CD4-positive, alpha-beta memory T cell (primary cell): ENCODE measurements at regions of chr1 and their contacts with region 1.

Region 1: DNA sequence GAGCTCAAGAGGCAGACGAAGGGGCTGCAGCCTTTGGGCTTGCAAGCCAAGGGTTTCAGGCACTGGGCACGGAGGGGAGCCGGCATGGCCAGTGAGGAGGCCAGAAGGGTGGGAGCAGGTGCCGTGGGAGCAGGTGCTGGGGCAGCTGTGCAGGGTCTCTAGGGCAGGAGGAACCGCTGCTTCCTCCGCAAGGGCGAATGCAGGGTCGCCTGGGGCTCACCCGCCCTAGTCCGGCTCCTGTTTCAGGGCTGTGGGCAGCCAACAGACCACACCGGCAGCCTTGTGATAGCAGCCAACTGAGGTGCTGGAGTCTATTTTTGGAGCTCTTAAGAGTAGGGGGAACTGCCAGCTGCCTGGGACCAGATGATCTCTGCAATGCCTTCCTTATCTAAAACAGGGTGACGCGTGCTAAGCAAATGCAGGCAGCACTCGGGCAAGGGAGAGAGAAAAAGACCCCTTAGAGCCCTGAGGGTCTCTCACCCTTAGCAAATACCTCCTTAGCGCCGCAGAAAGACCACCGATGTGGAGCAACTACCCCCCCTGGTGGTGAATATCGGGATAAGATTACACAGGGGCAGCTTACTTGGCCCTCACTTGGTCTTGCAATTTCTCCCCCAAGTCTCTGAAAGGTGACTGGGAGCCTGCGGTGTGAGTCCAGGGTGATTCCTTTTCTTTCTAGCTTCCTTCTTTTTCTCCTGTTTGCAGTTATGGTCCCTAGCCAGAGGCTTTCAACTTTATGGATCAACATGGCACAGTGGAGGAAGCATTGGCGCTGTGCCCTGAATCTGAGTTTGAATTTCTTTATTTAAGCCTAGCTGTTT is 20.7 kb upstream of the MAPKAPK2 start:
- DNase-seq: peak; percentile 64 to 76 (median 69)
- H3K4me3 ChIP-seq: no peak overlapping the region
- H3K4me3 Mint-ChIP-seq: peak overlapping the region in 2 of 8 donors; percentile 24 to 47
- H3K27ac ChIP-seq: no peak overlapping the region
- H3K27ac Mint-ChIP-seq: peak overlapping the region in 2 of 7 donors; percentile 25 to 33
- H3K4me1 ChIP-seq: peaks cover 14% of the 10 kb centered on the region
- H3K4me1 Mint-ChIP-seq: peaks cover 9 to 17% (median 11%) of the 10 kb centered on the region in 4 donors
- H3K27me3 ChIP-seq: no peaks in the 10 kb centered on the region
- H3K27me3 Mint-ChIP-seq: peaks cover 12 to 17% of the 10 kb centered on the region in 2 donors

Region 2: DNA sequence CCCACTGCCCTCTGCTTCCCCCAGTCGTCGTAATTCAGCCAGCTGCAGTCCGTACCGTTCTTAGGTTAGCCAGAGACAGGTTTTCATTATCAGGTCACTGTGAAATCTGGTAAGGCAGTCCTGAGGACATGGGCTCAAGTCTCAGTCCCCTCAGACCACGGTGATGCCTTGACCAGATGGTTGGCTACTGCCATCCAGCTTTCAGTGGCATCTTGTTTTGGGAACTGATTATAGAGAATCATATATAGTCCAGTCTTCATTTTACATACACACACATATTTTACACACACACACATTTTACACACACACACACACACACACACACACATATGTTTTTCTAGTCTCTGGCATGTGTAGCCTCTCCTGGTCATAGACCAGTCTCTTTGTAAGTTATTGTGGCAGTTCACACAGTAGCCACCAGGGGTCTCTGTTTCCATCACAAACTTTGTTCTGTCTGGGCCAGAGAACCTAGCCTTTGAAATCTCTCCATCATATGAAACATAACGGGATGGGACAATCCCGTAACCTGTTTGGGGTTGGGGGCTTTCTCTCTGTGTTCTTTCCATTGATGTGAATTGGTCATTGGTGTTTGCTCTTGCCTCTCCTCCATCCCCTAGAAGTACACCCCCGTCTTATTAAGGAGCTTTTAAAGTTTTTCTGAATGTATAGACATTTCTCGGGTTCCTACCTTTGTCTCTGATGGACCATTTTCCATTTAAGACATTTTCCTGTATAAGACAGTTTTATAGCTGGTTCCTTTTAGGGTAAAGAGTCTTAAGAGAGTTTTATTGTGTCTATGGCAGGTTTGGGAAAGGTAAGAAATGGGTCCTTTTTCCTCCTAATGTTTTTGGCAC is 202.2 kb before region 1 on chr1:
- CTCF ChIA-PET with region 1: interaction called, 57 read pairs
- POLR2A ChIA-PET with region 1: no interaction called
- intact Hi-C with region 1: loop called (anchors 1 kb)
- DNase-seq: peak; percentile 62 to 72 (median 65)
- H3K4me3 ChIP-seq: no peak overlapping the region
- H3K4me3 Mint-ChIP-seq: no peak overlapping the region
- H3K27ac ChIP-seq: no peak overlapping the region
- H3K27ac Mint-ChIP-seq: peak overlapping the region in 4 of 7 donors; percentile 13 to 77 (median 16)
- H3K4me1 ChIP-seq: peaks cover 36% of the 10 kb centered on the region
- H3K4me1 Mint-ChIP-seq: peaks cover 21 to 49% (median 36%) of the 10 kb centered on the region in 4 donors
- H3K27me3 ChIP-seq: no peaks in the 10 kb centered on the region
- H3K27me3 Mint-ChIP-seq: no peaks in the 10 kb centered on the region

Region 3: GRCh38 chr1:206479183-206480125 is 184.6 kb before region 1 on chr1:
- CTCF ChIA-PET with region 1: interaction called, 54 read pairs
- POLR2A ChIA-PET with region 1: no interaction called
- intact Hi-C with region 1: loop called (anchors 5 kb)
- DNase-seq: peak; percentile 46 to 67 (median 52)
- H3K4me3 ChIP-seq: no peak overlapping the region
- H3K4me3 Mint-ChIP-seq: no peak overlapping the region
- H3K27ac ChIP-seq: no peak overlapping the region
- H3K27ac Mint-ChIP-seq: peak overlapping the region in 5 of 7 donors; percentile 8 to 80 (median 78)
- H3K4me1 ChIP-seq: peaks cover 21% of the 10 kb centered on the region
- H3K4me1 Mint-ChIP-seq: peaks cover 5 to 18% (median 12%) of the 10 kb centered on the region in 4 donors
- H3K27me3 ChIP-seq: no peaks in the 10 kb centered on the region
- H3K27me3 Mint-ChIP-seq: no peaks in the 10 kb centered on the region

Region 4: DNA sequence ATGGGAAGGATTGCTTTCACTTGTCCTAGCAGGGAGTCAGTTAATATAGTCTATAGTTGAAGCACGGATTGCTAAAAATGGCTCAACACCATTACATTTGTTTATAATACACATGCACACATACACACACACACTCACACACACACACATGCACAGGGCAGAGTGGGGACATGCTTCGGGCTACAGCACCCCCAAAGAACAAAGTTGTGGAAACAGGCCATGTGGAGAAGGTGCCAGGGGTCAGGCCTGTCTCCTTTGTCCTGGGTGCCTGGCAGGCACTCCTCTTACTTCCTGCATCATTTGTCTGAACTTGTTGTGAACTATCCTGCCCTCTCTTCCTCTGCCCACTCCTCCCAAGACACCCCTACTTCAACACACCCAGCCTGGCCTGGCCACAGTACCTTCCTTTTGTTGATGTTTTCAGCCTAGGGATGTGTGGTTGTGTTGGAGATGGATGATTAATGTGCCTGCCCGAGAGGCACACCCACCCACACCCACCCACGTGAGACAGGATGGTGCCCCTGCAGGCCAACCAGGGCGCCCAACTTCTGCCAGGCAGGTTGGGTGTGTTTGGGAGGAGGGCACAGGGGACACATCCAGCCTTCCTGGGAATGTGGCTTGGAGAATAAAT is 139.2 kb before region 1 on chr1:
- CTCF ChIA-PET with region 1: no interaction called
- POLR2A ChIA-PET with region 1: no interaction called
- intact Hi-C with region 1: no loop called
- DNase-seq: no peak
- H3K4me3 ChIP-seq: no peak overlapping the region
- H3K4me3 Mint-ChIP-seq: no peak overlapping the region
- H3K27ac ChIP-seq: no peak overlapping the region
- H3K27ac Mint-ChIP-seq: peak overlapping the region in 1 of 7 donors; percentile 42
- H3K4me1 ChIP-seq: no peaks in the 10 kb centered on the region
- H3K4me1 Mint-ChIP-seq: peaks cover 0 to 4% (median under 1%) of the 10 kb centered on the region in 4 donors
- H3K27me3 ChIP-seq: no peaks in the 10 kb centered on the region
- H3K27me3 Mint-ChIP-seq: no peaks in the 10 kb centered on the region

Region 5: DNA sequence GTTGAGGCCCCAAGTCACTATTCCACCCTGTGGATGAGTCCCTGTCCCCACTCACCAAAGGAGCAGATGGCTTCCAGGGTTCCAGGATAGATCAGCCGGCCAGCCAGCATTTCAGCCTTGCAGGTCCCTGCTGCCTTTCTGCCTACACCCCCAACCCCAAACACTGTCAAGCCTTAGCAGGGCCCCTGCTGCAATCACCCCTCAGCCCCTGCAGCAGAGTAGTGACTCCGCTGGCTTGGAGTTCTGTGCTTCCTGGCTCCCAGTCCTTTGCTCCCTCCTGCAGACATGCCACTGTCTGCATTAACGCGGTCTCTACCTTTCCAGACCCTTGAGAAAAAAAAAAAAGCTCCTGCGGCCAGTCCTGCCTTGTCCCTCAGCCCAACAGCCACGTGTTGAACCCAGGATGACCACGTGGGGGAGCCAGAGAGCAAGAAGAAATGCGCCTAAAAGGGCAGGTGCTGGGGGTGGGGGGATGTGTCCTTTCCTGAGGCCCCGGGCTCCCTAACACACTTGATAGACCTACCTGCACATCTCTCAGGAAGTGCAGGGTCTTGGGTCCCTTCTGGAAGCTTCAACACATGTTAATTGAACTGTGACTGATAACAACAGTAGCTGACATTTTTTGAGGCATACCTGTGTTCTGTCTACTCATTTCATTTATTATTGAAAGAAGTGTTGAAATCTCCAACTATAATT is 119.3 kb before region 1 on chr1:
- CTCF ChIA-PET with region 1: interaction called, 57 read pairs
- POLR2A ChIA-PET with region 1: interaction called, 3 read pairs
- intact Hi-C with region 1: loop called (anchors 1 kb)
- DNase-seq: peak; percentile 66 to 83 (median 76)
- H3K4me3 ChIP-seq: no peak overlapping the region
- H3K4me3 Mint-ChIP-seq: peak overlapping the region in 2 of 8 donors; percentile 6 to 52
- H3K27ac ChIP-seq: no peak overlapping the region
- H3K27ac Mint-ChIP-seq: peak overlapping the region in 5 of 7 donors; percentile 27 to 77 (median 60)
- H3K4me1 ChIP-seq: peaks cover 10% of the 10 kb centered on the region
- H3K4me1 Mint-ChIP-seq: peaks cover 5 to 15% (median 11%) of the 10 kb centered on the region in 4 donors
- H3K27me3 ChIP-seq: no peaks in the 10 kb centered on the region
- H3K27me3 Mint-ChIP-seq: no peaks in the 10 kb centered on the region

Region 6: DNA sequence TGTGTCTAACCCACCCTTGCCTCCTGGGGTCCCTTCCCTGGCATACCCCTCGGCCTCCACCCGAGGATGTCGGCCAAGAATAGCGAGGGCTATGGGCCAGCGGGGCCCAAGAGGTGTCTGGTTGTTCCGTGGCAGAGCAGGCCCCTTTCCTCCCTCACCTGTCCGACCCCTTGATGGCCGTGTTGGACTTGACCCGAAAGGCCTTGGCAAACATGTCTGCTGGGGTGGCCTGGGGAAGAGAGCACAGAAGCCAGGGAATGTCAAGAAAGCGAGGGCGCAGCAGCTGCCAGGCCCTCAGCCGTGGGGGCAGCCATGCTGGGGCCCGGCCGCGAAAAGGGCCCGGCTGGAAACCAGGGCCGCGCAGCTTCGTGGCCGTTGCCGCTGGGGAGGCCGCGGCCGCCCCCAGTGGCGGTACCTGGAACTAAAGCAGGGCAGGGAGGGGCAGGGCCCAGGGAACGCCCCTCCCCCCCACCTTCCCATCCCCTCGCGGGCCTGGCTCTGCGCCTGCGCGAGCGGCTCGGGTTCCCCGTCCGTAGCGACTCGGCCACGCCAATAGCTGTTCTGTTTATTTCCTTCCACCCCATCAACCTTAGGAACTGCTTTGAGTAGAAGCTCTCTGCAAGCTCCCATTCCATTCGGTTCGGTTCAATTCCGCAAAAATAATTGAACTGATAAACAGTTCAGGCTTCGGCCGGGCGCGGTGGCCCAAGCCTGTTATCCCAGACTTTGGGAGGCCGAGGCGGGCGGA is 51.7 kb before region 1 on chr1 and contains the start of gene EIF2D:
- CTCF ChIA-PET with region 1: interaction called, 15 read pairs
- POLR2A ChIA-PET with region 1: interaction called, 3 read pairs
- intact Hi-C with region 1: loop called (anchors 1 kb)
- DNase-seq: peak; percentile 90 to 96 (median 92)
- H3K4me3 ChIP-seq: peak within 1 kb of the TSS; percentile 62 to 77
- H3K4me3 Mint-ChIP-seq: peak within 1 kb of the TSS; percentile 91 to 95 (median 93)
- H3K27ac ChIP-seq: peak within 1 kb of the TSS; percentile 80
- H3K27ac Mint-ChIP-seq: peak within 1 kb of the TSS; percentile 87 to 98 (median 96)
- H3K4me1 ChIP-seq: peaks cover 12% of the 10 kb centered on the region
- H3K4me1 Mint-ChIP-seq: peaks cover 12 to 34% (median 21%) of the 10 kb centered on the region in 4 donors
- H3K27me3 ChIP-seq: no peaks in the 10 kb centered on the region
- H3K27me3 Mint-ChIP-seq: no peaks in the 10 kb centered on the region
- total RNA-seq, gene EIF2D: 53.5 to 54.5 TPM

Region 7: GRCh38 chr1:206646504-206646903 is 17.5 kb before region 1 on chr1:
- CTCF ChIA-PET with region 1: interaction called, 33 read pairs
- POLR2A ChIA-PET with region 1: no interaction called
- intact Hi-C with region 1: no loop called
- DNase-seq: no peak
- H3K4me3 ChIP-seq: no peak overlapping the region
- H3K4me3 Mint-ChIP-seq: no peak overlapping the region
- H3K27ac ChIP-seq: no peak overlapping the region
- H3K27ac Mint-ChIP-seq: no peak overlapping the region
- H3K4me1 ChIP-seq: no peaks in the 10 kb centered on the region
- H3K4me1 Mint-ChIP-seq: no peaks in the 10 kb centered on the region
- H3K27me3 ChIP-seq: no peaks in the 10 kb centered on the region
- H3K27me3 Mint-ChIP-seq: no peaks in the 10 kb centered on the region

Region 8: DNA sequence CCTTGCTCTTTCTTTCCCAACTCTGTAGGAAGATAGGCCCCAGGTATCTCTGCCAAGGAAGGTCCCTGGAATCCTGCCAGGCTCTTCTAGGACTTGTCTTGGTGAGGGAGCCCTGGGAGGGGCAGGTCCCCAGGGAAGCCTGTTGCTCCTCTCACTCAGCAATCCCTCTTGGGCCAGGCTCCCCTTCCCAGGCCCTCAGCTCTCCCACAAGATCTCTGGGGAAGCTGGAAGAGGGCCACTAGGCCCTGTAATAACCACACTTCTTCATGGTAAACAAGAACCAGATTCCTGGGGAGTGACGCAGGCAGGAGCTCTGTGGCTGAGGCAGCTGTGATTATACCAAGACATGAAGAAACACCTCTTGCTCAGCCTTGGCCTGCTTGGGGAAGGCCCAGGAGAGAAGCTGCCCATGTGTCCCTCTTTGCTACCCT is 10.7 kb after region 1 on chr1:
- CTCF ChIA-PET with region 1: interaction called, 37 read pairs
- POLR2A ChIA-PET with region 1: no interaction called
- intact Hi-C with region 1: no loop called
- DNase-seq: no peak
- H3K4me3 ChIP-seq: no peak overlapping the region
- H3K4me3 Mint-ChIP-seq: no peak overlapping the region
- H3K27ac ChIP-seq: no peak overlapping the region
- H3K27ac Mint-ChIP-seq: no peak overlapping the region
- H3K4me1 ChIP-seq: peaks cover 9% of the 10 kb centered on the region
- H3K4me1 Mint-ChIP-seq: peaks cover 0 to 10% (median 3%) of the 10 kb centered on the region in 4 donors
- H3K27me3 ChIP-seq: no peaks in the 10 kb centered on the region
- H3K27me3 Mint-ChIP-seq: peaks cover 0 to 1% of the 10 kb centered on the region in 2 donors

Region 9: GRCh38 chr1:206744683-206745082 is 80.6 kb after region 1 on chr1:
- CTCF ChIA-PET with region 1: no interaction called
- POLR2A ChIA-PET with region 1: no interaction called
- intact Hi-C with region 1: no loop called
- DNase-seq: peak in 1 of 5 donors; percentile 44
- H3K4me3 ChIP-seq: no peak overlapping the region
- H3K4me3 Mint-ChIP-seq: peak overlapping the region in 3 of 8 donors; percentile 31 to 60 (median 39)
- H3K27ac ChIP-seq: no peak overlapping the region
- H3K27ac Mint-ChIP-seq: peak overlapping the region in 5 of 7 donors; percentile 33 to 78 (median 48)
- H3K4me1 ChIP-seq: peaks cover 25% of the 10 kb centered on the region
- H3K4me1 Mint-ChIP-seq: peaks cover 20 to 64% (median 33%) of the 10 kb centered on the region in 4 donors
- H3K27me3 ChIP-seq: no peaks in the 10 kb centered on the region
- H3K27me3 Mint-ChIP-seq: no peaks in the 10 kb centered on the region

Region 10: DNA sequence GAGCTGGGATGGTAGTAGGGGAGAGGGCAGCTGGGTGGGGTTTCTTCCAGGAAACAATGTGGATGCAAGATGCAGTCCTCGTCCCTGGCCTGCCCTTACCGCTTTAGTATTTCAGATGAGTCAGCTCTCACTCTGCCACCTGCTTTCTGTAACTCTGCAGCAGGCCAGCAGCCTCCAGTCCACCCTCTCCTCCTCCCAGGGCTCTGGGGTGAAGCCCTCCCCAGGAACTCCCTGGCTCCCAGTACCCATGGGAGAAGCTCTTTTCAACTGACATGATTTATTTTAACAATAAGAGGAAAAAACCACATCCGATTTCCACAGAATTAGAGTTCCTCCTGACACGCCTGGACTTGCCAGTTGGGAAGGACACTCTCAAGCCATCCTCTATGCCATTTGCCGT is 162.4 kb after region 1 on chr1:
- CTCF ChIA-PET with region 1: no interaction called
- POLR2A ChIA-PET with region 1: no interaction called
- intact Hi-C with region 1: no loop called
- DNase-seq: no peak
- H3K4me3 ChIP-seq: no peak overlapping the region
- H3K4me3 Mint-ChIP-seq: no peak overlapping the region
- H3K27ac ChIP-seq: no peak overlapping the region
- H3K27ac Mint-ChIP-seq: peak overlapping the region in 2 of 7 donors; percentile 1 to 14
- H3K4me1 ChIP-seq: peaks cover 21% of the 10 kb centered on the region
- H3K4me1 Mint-ChIP-seq: peaks cover 14 to 37% (median 23%) of the 10 kb centered on the region in 4 donors
- H3K27me3 ChIP-seq: no peaks in the 10 kb centered on the region
- H3K27me3 Mint-ChIP-seq: peaks cover 0 to 3% of the 10 kb centered on the region in 2 donors

Region 11: DNA sequence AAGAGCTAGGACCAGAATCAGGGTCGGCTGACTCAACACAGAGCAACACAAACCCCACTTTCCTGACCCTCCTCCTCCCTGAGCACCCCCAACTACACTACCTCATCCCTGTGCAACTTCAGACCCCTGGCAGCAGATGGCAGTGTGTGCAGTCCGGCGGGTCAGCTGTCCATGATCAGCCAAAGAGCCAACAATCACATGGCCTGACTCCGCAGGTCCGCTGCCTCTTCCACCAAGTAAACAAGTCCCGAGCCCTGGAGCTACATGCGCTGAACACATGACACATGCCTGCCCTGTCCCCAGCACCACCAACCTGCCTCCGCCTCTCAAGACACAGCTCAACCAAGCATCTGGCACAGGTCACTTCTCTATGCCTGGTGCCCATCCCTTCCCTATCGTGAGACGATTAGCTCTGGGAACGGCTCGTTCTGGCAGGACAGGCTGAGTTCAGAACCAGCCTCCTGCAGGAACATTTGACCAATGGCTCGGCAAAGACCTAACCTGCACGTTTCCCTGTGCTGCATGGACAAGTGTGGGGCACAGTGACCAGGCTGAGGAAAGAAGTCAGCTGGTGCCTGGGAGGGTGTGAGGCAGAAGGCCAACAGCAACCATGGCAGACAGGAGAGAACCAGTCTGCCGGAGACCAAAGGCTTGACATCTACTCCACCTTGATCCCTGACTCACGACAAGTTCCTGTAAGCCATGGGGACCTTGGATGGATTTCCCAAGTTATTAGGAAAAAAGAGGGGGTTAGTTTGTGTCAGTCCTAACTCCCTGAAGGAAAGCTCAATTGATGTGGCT is 1148.1 kb after region 1 on chr1:
- CTCF ChIA-PET with region 1: no interaction called
- POLR2A ChIA-PET with region 1: no interaction called
- intact Hi-C with region 1: no loop called
- DNase-seq: no peak
- H3K4me3 ChIP-seq: no peak overlapping the region
- H3K4me3 Mint-ChIP-seq: peak overlapping the region in 1 of 8 donors; percentile 17
- H3K27ac ChIP-seq: no peak overlapping the region
- H3K27ac Mint-ChIP-seq: peak overlapping the region in 6 of 7 donors; percentile 13 to 85 (median 61)
- H3K4me1 ChIP-seq: peaks cover 75% of the 10 kb centered on the region
- H3K4me1 Mint-ChIP-seq: peaks cover 51 to 90% (median 74%) of the 10 kb centered on the region in 4 donors
- H3K27me3 ChIP-seq: no peaks in the 10 kb centered on the region
- H3K27me3 Mint-ChIP-seq: no peaks in the 10 kb centered on the region